ENCODE measurements at regions of chr11 and their contacts with region 1.

Region 1: DNA sequence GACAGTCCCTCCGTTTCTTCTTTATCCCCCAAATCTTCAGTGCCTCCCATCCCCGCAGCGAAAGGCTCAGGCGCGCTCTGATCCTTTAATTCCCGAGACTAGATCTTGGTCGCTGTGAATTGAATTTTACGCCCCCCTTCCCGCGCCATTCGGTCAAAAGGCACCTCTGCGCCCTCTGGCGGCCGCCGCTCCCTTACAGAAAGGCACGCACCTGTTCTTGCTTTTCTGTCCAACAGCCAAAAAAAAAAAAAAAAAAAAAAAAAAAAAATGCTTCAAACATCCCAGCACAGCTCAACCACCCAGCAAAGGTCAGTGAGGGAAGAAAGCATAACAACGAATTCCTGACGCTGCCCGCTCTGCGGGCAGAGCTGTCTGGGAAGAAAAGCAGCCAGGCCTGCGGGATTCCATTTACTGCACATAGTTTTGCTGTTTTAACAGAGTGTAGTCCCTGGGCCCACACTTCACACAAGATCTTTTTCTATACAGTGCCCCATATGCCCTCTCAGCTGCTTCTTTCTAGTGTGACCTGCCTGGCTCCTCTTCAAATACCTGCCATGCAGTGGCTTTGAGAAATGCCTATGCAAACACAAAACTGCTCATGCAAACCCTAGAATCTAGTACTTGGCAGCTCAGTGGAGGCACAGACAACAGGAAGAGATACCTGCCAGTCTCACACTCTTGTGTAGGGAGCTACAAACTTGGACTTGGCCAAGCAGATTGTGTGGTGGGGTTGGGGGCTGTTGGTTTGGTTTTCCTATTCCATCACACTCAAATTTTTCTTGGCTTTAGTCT is 1.3 kb upstream of the ESAM start:
- DNase-seq: peak; percentile 77 to 88
- ATAC-seq: peak; percentile 61 to 65 (median 64)
- H3K4me3 ChIP-seq: peak overlapping the region; percentile 41
- H3K4me3 Mint-ChIP-seq: peak overlapping the region; percentile 97
- H3K27ac ChIP-seq: no peak overlapping the region
- H3K27ac Mint-ChIP-seq: no peak overlapping the region
- H3K4me1 ChIP-seq: peaks cover 47% of the 10 kb centered on the region
- H3K4me1 Mint-ChIP-seq: peaks cover 17 to 27% of the 10 kb centered on the region in 2 donors
- H3K27me3 ChIP-seq: peaks cover 37% of the 10 kb centered on the region
- H3K27me3 Mint-ChIP-seq: peaks cover 23 to 26% of the 10 kb centered on the region in 2 donors
- CTCF ChIP-seq: peak; percentile 86

Region 2: GRCh38 chr11:124669193-124669592 is 94.2 kb before region 1 on chr11:
- intact Hi-C with region 1: loop called (anchors 1 kb)
- DNase-seq: peak in 1 of 2 donors; percentile 81
- ATAC-seq: peak in 2 of 3 donors; percentile 29 to 33
- H3K4me3 ChIP-seq: no peak overlapping the region
- H3K4me3 Mint-ChIP-seq: no peak overlapping the region
- H3K27ac ChIP-seq: no peak overlapping the region
- H3K27ac Mint-ChIP-seq: no peak overlapping the region
- H3K4me1 ChIP-seq: peaks cover 18% of the 10 kb centered on the region
- H3K4me1 Mint-ChIP-seq: peaks cover 12 to 15% of the 10 kb centered on the region in 2 donors
- H3K27me3 ChIP-seq: no peaks in the 10 kb centered on the region
- H3K27me3 Mint-ChIP-seq: no peaks in the 10 kb centered on the region
- CTCF ChIP-seq: peak; percentile 93

Region 3: GRCh38 chr11:124748481-124749343 is 14.6 kb before region 1 on chr11:
- intact Hi-C with region 1: loop called (anchors 1 kb)
- DNase-seq: no peak
- ATAC-seq: no peak
- H3K4me3 ChIP-seq: no peak overlapping the region
- H3K4me3 Mint-ChIP-seq: no peak overlapping the region
- H3K27ac ChIP-seq: no peak overlapping the region
- H3K27ac Mint-ChIP-seq: no peak overlapping the region
- H3K4me1 ChIP-seq: peaks cover 31% of the 10 kb centered on the region
- H3K4me1 Mint-ChIP-seq: peaks cover 0 to 7% of the 10 kb centered on the region in 2 donors
- H3K27me3 ChIP-seq: no peaks in the 10 kb centered on the region
- H3K27me3 Mint-ChIP-seq: peaks cover 14 to 18% of the 10 kb centered on the region in 2 donors
- CTCF ChIP-seq: no peak

Region 4: GRCh38 chr11:124799348-124800225 is 36.2 kb after region 1 on chr11:
- intact Hi-C with region 1: loop called (anchors 2 kb)
- DNase-seq: peak; percentile 18 to 68
- ATAC-seq: peak; percentile 52 to 63 (median 54)
- H3K4me3 ChIP-seq: peak overlapping the region; percentile 86
- H3K4me3 Mint-ChIP-seq: peak overlapping the region; percentile 93
- H3K27ac ChIP-seq: peak overlapping the region; percentile 96
- H3K27ac Mint-ChIP-seq: peak overlapping the region; percentile 88 to 97
- H3K4me1 ChIP-seq: peaks cover 13% of the 10 kb centered on the region
- H3K4me1 Mint-ChIP-seq: peaks cover 16 to 23% of the 10 kb centered on the region in 2 donors
- H3K27me3 ChIP-seq: no peaks in the 10 kb centered on the region
- H3K27me3 Mint-ChIP-seq: no peaks in the 10 kb centered on the region
- CTCF ChIP-seq: no peak

Region 5: DNA sequence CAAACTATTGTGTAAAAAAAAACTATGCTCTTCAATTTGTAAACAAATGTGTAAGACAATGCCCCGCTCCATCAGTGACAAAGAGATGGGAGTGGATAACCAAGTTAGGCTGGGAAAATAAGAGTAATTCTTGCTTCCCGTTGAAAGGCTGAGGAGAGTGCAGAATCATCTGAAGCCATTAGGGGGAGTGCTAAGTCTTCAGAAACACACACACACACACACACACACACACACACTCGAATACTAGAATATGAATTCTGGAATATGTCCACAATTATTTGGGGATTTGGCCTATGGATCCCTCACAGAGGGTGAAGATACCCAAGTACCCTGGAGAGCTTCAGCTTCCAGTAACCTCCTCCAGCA is 74.1 kb after region 1 on chr11:
- intact Hi-C with region 1: loop called (anchors 10 kb)
- DNase-seq: peak in 1 of 2 donors; percentile 41
- ATAC-seq: no peak
- H3K4me3 ChIP-seq: no peak overlapping the region
- H3K4me3 Mint-ChIP-seq: no peak overlapping the region
- H3K27ac ChIP-seq: no peak overlapping the region
- H3K27ac Mint-ChIP-seq: no peak overlapping the region
- H3K4me1 ChIP-seq: peaks cover 18% of the 10 kb centered on the region
- H3K4me1 Mint-ChIP-seq: peaks cover 6 to 9% of the 10 kb centered on the region in 2 donors
- H3K27me3 ChIP-seq: peaks cover 32% of the 10 kb centered on the region
- H3K27me3 Mint-ChIP-seq: peaks cover 51 to 62% of the 10 kb centered on the region in 2 donors
- CTCF ChIP-seq: no peak